ENCODE measurements at regions of chr3 and their contacts with region 1.

Region 1: DNA sequence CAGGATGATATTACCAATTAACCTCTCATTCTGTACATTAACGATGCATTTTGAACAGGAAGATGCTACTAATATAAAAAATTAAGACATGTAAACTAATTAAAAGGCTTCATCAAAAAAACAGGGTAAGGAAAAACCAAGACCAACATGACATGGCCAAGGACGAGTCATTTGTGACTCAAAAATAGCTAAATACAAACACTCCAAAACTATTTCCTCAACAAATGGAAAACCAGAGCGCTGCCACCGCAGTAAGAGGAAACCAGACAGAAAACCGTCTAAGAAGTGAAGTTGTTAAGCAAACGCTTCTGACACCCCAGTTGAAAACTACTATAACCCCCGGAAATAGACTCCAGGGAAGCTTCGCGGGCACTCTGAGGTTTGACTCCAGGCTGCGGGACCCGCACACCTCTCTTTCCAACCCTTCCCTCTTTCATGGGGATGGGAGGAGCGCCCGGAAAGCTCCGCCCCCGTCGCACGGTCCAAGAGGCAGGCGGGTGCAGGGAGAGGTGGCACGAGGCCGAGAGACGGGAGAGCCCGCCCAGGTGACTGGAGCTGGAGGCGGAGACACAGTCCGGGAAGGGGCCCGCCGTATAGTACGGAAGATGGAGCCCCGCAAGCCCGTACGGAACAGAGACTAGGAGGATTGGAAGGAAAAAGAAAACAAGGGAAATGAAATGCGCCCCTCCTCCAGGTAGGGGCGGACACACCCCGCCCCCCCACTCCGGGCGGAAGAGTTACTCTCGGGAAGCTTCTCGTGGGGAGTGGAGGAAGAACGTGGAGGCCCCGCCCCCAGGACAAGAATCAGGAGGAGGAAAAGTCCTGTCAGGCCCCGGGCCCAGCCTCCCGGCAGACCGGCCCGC is 708 bp downstream of the DCAF1 start:
- DNase-seq: peak; percentile 85
- H3K4me3 Mint-ChIP-seq: peak overlapping the region; percentile 98
- H3K27ac Mint-ChIP-seq: peak overlapping the region; percentile 97
- H3K4me1 Mint-ChIP-seq: peaks cover 11% of the 10 kb centered on the region
- H3K27me3 Mint-ChIP-seq: no peaks in the 10 kb centered on the region

Region 2: DNA sequence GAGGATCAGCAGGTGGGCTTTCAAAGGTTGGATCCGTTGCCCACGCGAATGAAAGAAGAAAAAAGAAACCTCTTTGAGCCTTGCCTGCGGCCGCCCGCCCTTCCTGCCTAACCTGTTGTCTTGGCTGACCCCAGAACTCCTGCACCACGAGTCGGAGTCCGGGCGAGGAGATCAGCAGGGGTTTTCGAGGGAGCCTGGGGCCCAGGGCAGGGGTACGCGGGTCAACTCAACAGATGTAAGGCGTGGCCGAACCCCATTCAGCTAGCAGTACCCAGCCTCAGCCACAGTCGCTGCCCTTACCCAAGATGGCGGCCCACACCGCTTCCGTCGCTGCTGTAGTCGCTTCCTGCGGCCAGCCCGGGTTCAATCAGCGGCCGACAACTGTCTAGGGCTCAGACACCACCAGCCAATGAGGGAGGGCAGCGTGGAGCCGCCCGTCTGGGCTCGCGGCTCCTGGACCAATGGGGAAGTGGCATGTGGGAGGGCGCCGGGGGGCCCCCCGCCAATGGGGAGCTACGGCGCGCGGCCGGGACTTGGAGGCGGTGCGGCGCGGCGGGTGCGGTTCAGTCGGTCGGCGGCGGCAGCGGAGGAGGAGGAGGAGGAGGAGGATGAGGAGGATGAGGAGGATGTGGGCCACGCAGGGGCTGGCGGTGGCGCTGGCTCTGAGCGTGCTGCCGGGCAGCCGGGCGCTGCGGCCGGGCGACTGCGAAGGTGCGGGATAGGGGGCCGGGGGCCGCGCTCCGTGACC is 114.2 kb before region 1 on chr3 and contains the start of gene MANF:
- intact Hi-C with region 1: loop called (anchors 2 kb)
- DNase-seq: peak; percentile 97
- H3K4me3 Mint-ChIP-seq: peak within 1 kb of the TSS; percentile 96
- H3K27ac Mint-ChIP-seq: peak within 1 kb of the TSS; percentile 97
- H3K4me1 Mint-ChIP-seq: peaks cover 41% of the 10 kb centered on the region
- H3K27me3 Mint-ChIP-seq: no peaks in the 10 kb centered on the region
- total RNA-seq, gene MANF: 235 and 238 TPM in 2 replicates

Region 3: DNA sequence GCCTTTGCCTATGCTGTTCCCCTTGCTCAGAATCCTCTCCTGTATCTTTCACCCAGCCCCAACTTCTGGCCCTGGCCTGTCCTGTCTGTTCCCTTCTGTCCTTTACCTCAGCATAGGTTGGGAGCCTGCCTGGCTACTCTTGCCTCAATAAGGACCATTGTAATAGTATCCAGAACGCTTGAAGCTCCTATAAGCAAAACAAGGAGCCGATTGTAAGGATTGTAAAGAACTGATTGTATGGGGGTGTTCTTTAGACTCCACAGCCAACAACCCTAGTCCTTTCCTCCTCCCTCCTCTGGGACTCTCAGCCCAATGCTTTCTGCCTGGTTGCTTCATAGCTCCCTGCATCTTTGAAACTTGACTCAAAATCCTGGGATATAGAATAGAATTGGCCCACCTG is 20.7 kb after region 1 on chr3:
- intact Hi-C with region 1: no loop called
- DNase-seq: no peak
- H3K4me3 Mint-ChIP-seq: no peak overlapping the region
- H3K27ac Mint-ChIP-seq: no peak overlapping the region
- H3K4me1 Mint-ChIP-seq: peaks cover 1% of the 10 kb centered on the region
- H3K27me3 Mint-ChIP-seq: no peaks in the 10 kb centered on the region

Region 4: DNA sequence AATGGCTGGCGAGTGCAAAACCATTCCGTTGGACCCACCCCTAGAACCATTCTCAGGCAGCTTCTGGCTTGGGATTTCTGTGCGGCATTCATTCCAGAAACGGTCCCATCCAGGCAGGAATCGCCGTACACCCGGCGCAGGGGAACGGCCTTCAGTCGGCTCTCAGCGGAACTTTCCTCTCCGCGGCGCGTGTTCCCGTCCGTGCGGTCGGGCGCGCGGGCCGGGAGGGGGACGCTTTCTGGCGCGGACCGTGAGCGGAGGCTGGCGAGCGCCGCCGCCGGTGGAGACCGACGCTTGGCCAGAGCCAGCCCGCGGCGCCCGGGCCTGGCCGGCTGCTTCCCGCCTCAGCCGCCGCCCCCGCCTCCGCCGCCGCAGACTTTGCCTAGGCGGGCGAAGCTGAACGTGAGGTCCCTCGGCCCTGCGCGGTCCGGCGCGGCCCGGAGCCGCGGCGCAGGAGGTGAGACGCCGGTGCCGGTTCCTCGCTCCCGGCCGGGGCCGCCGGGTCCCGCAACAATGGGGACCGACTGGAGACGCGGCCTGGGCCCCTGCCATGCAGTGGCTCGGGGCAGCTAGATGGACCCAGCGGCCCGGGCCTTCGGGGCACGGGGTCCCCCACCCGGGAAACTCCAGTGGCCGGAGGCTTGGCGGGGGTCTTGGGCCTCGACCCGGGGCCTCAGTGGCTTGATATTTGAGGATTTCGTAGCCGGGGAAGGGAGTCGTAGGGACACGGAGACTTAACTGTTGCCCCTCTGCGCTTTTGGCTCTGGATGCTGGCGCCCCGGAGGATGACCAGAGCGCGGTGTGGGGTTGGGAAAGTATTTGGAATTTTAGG is 39.6 kb after region 1 on chr3 and contains the start of gene RAD54L2:
- intact Hi-C with region 1: loop called (anchors 1 kb)
- DNase-seq: peak; percentile 68
- H3K4me3 Mint-ChIP-seq: peak within 1 kb of the TSS; percentile 91
- H3K27ac Mint-ChIP-seq: peak within 1 kb of the TSS; percentile 91
- H3K4me1 Mint-ChIP-seq: peaks cover 27% of the 10 kb centered on the region
- H3K27me3 Mint-ChIP-seq: no peaks in the 10 kb centered on the region
- total RNA-seq, gene RAD54L2: 39.3 and 40.0 TPM in 2 replicates

Region 5: DNA sequence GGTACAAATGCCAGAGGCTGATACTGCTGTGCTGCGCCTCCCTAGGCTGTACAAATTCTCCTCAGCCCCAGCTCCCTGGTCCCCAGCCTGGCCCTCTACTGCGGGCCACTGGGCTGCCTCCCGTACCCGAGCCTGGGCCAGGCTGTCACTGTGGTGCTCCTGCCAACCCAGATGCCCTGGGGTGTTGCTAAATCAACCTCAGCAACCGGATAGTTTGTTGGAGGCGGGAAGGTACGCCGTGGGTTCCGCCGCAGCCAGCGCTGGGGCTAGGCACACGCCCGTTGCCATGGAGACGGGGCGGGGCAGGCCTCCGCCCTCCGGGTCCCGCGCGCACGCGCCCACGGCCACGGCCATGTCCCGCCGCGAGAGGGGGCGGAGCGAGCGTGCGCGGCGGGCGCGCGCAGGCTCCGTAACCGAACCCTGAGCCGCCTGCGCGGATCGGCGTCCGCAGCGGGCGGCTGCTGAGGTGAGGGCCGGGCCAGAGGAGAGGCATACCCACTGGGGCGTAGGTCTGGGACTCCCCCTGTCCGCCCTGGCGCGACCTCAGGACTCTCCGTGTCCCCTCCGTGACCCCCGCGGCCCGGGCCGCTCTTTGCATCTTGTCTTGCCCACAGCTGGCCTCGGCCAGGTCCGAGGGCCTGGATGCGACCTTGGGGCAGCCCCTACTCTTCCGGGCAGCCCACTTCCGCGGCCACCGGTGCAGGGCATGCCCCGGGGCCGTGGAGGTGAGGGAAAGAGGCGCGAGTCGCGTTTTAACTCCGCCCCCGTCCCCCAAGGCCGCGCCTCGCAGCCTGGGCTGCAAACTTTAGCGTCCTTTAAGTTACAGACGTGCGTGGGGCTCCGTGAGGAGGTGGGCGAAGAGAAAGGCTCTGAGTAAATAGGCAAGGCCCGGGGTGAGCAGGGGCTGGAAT is 172.0 kb after region 1 on chr3 and contains the start of gene TEX264:
- intact Hi-C with region 1: loop called (anchors 1 kb)
- DNase-seq: peak; percentile 93
- H3K4me3 Mint-ChIP-seq: peak within 1 kb of the TSS; percentile 86
- H3K27ac Mint-ChIP-seq: peak within 1 kb of the TSS; percentile 79
- H3K4me1 Mint-ChIP-seq: peaks cover 60% of the 10 kb centered on the region
- H3K27me3 Mint-ChIP-seq: no peaks in the 10 kb centered on the region
- total RNA-seq, gene TEX264: 43.1 TPM in 2 replicates

Region 6: GRCh38 chr3:51799879-51800749 is 301.0 kb after region 1 on chr3:
- intact Hi-C with region 1: loop called (anchors 1 kb)
- DNase-seq: peak; percentile 8
- H3K4me3 Mint-ChIP-seq: no peak overlapping the region
- H3K27ac Mint-ChIP-seq: no peak overlapping the region
- H3K4me1 Mint-ChIP-seq: peaks cover 31% of the 10 kb centered on the region
- H3K27me3 Mint-ChIP-seq: peaks cover 25% of the 10 kb centered on the region

Measured in activated T-helper 2 cell treated with anti-CD3 and anti-CD28 coated beads, Interferon-gamma antibody, Interleukin-2, Interleukin-4, amounts not matched to agents 10 μg/mL and 5 μg/mL and 100 μg/mL, durations not matched to agents 14 hours and 24 hours and 36 hours (primary cell).